Activated CD8-positive, alpha-beta T cell treated with anti-CD3 and anti-CD28 coated beads for 36 hours (primary cell): ENCODE measurements at regions of chr20 and their contacts with region 1.

Region 1: DNA sequence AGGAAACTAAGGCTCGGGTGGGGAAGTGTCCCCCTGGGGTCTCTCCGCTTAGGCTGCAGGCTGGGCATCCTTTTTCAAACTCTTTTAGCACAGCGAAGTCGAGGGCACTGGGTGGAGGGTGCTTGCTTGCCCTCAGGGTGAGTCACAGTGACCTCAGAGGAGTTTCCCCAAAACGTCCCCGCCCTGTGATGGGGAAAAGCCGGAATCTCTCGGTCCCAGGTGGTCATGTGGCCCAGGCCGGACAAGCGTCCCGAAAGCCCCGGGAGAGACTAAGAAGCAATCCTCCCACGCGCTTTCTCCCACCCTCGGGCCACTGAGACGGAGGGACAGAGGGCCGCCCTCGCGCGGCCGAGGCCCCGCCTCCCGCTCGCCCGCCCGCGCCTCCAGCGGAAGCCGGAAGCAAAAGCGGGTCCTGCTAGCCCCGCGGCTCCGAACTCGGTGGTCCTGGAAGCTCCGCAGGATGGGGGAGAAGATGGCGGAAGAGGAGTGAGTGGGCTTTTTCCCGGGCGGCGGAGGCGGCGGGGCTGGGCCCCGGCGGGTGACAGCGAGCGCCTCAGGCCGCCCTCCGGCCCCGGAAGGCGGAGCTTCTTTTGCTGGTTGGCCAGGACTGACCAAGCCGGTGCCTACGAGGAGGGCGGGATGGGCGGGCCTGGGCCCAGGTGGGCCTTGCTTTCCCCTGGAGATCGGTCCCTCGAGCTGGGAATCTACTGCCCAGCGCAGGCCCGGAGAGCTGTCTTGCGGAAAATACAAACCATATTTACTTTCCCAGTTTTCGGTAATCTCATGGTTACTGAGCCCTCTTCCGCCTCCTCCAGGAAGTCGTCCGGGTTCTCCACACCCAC is at the start of gene SLC9A8:
- DNase-seq: peak; percentile 94
- ATAC-seq: peak; percentile 92
- H3K4me3 Mint-ChIP-seq: peak within 1 kb of the TSS; percentile 97
- H3K27ac Mint-ChIP-seq: peak within 1 kb of the TSS; percentile 96
- H3K4me1 Mint-ChIP-seq: peaks cover 39% of the 10 kb centered on the region
- H3K27me3 Mint-ChIP-seq: no peaks in the 10 kb centered on the region
- CTCF ChIP-seq: peak; percentile 25
- total RNA-seq, gene SLC9A8: 9.4 to 11.3 TPM

Region 2: DNA sequence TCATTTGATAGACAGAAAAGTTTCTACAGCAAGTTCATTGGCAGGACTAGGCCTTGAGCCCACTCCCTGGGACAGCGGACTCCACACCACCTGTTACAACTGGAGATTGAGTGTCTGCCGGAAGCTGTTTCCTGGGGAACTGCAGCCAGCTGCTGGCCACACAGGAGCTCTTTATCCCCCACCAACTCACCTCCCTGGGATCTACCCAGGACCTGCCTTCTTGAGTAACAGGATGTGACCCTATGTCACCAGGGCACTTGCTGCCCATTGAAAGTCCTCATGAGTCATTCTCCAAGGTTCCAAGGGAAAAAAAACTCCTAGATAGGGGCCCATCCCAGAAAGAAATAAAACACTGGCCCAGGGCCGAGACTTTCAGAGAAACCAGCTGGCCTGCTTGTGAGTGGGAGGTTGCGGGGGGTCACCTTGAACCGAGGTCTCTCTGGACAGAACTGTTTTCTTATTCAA is 37.4 kb before region 1 on chr20:
- CTCF ChIA-PET with region 1: no interaction called
- POLR2A ChIA-PET with region 1: interaction called, 14 read pairs
- intact Hi-C with region 1: no loop called
- DNase-seq: no peak
- ATAC-seq: no peak
- H3K4me3 Mint-ChIP-seq: no peak overlapping the region
- H3K27ac Mint-ChIP-seq: no peak overlapping the region
- H3K4me1 Mint-ChIP-seq: peaks cover 20% of the 10 kb centered on the region
- H3K27me3 Mint-ChIP-seq: peaks cover 12% of the 10 kb centered on the region
- CTCF ChIP-seq: no peak